Sigmoid colon (tissue), 7 donors: ENCODE measurements at regions of chr19 and their contacts with region 1.

Region 1: DNA sequence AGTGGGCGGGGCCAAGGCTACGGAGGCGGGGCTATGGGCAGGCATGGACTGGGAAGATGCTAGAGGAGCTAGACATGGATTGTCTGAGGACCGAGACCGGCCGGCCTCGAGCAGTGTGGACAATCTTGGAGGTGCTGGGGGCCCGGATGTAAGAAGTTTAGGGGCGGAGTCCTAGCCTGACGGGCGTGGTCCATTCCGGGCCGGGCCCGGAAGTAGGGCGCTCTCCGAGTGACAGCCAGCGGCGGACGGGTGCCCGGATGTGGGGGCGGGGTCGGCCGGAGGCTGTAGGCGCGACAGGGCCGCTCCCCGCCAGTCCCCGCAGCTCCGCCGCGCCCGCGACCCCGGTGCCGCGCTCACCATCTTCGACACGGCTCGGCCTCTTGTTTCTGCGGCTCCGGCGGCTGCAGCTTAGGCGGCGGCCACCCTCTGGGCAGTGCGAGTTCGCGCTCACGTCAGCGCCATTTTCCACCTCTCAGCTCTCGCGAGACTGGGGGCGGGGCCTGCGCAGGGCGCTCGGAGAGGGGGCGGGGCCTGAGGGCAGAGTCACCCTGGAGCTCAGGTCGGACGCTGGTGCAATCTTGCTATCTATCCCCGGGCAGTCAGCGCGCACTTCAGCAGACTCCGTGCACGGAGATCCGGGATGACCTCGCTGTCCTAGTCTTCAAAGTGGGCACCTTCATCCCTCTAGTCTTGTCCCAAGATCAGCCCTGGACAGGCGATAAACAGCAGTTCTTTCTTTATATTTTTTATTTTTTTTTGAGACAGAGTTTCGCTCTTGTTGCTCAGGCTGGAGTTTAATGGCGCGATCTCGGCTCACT is at the start of gene ZNF414:
- DNase-seq: peak; percentile 99
- H3K4me3 ChIP-seq: peak within 1 kb of the TSS; percentile 66 to 82 (median 78)
- H3K27ac ChIP-seq: peak within 1 kb of the TSS; percentile 93 to 99 (median 98)
- H3K4me1 ChIP-seq: peaks cover 0 to 31% (median 27%) of the 10 kb centered on the region in 4 donors
- H3K27me3 ChIP-seq: no peaks in the 10 kb centered on the region
- CTCF ChIP-seq: no peak
- EP300 ChIP-seq: peak in 1 of 4 donors; percentile 53
- POLR2A ChIP-seq: peak; percentile 83 to 93
- total RNA-seq, gene ZNF414: 3.6 to 18.9 (median 10.9) TPM

Region 2: DNA sequence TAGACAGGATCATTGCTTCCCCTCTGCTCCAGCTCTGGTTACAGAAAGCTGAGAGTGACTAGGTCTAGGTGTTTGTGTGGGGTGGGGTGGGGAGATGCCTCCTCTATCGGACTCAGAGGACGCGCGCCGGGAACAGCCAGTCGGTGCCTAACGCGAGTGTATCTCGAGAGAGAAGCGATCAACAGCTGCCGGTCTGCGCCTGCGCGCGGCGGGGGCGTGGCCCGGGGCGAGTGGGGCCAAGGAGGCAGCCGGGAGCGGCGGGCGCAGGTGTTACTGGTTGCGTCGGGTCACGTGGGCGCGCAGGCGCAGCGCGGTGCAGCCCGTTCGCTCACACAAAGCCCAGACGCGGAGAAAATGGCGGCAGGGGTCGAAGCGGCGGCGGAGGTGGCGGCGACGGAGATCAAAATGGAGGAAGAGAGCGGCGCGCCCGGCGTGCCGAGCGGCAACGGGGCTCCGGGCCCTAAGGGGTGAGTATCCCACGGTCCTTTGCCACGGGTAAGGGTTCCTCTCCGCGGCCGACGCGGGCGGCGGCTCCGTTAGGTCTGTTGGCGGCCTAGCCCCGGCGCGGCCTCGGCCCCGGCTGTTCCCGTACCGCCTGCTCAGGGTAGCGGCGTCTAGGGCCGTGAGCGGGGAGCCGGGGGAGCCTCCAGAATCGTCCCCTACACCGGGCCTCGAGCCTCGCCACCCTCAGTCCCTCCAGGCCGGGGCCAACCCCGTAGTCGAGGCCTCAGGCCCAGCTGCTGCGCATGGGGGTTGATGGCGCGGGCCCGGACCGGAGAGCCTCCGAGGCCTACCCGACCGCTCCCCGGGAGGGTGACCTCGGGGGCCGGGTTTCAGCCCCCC is 69.0 kb before region 1 on chr19 and contains the start of gene HNRNPM:
- intact Hi-C with region 1: loop called (anchors 2 kb)
- DNase-seq: peak; percentile 100
- H3K4me3 ChIP-seq: peak within 1 kb of the TSS; percentile 86 to 99 (median 91)
- H3K27ac ChIP-seq: peak within 1 kb of the TSS; percentile 96 to 98 (median 98)
- H3K4me1 ChIP-seq: peaks cover 0 to 45% (median 41%) of the 10 kb centered on the region in 4 donors
- H3K27me3 ChIP-seq: no peaks in the 10 kb centered on the region
- CTCF ChIP-seq: no peak
- EP300 ChIP-seq: no peak
- POLR2A ChIP-seq: peak; percentile 85 to 91
- total RNA-seq, gene HNRNPM: 62.8 to 100 (median 76.1) TPM

Region 3: DNA sequence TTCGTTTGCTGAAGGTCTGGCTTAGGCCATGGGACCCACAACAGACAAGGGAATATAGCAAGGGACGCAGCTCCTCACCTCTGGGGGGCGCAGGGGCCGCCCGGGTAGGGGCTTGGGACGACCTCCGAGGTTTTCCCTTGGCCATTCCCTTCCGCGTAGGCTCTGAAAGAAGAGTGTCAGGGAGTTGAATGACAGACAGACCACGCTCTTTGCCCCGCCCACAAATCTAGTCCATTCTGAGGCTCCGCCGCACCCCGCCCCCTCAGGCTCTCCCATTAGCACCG is 11.4 kb after region 1 on chr19:
- intact Hi-C with region 1: loop called (anchors 1 kb)
- DNase-seq: no peak
- H3K4me3 ChIP-seq: peak overlapping the region; percentile 13 to 94 (median 40)
- H3K27ac ChIP-seq: peak overlapping the region; percentile 79 to 94 (median 88)
- H3K4me1 ChIP-seq: peaks cover 0 to 14% (median 11%) of the 10 kb centered on the region in 4 donors
- H3K27me3 ChIP-seq: no peaks in the 10 kb centered on the region
- CTCF ChIP-seq: no peak
- EP300 ChIP-seq: no peak
- POLR2A ChIP-seq: peak in 1 of 2 donors; percentile 24